CD4-positive, alpha-beta memory T cell (primary cell): ENCODE measurements at regions of chr17 and their contacts with region 1.

Region 1: GRCh38 chr17:32253117-32253611 is 12.5 kb upstream of the RHBDL3 start:
- DNase-seq: peak; percentile 41 to 62 (median 50)
- H3K4me3 ChIP-seq: no peak overlapping the region
- H3K4me3 Mint-ChIP-seq: no peak overlapping the region
- H3K27ac ChIP-seq: no peak overlapping the region
- H3K27ac Mint-ChIP-seq: no peak overlapping the region
- H3K4me1 ChIP-seq: no peaks in the 10 kb centered on the region
- H3K4me1 Mint-ChIP-seq: no peaks in the 10 kb centered on the region
- H3K27me3 ChIP-seq: no peaks in the 10 kb centered on the region
- H3K27me3 Mint-ChIP-seq: peaks cover 1 to 2% of the 10 kb centered on the region in 2 donors

Region 2: GRCh38 chr17:31702041-31702440 is 551.1 kb before region 1 on chr17:
- CTCF ChIA-PET with region 1: no interaction called
- POLR2A ChIA-PET with region 1: no interaction called
- intact Hi-C with region 1: no loop called
- DNase-seq: no peak
- H3K4me3 ChIP-seq: no peak overlapping the region
- H3K4me3 Mint-ChIP-seq: no peak overlapping the region
- H3K27ac ChIP-seq: no peak overlapping the region
- H3K27ac Mint-ChIP-seq: no peak overlapping the region
- H3K4me1 ChIP-seq: no peaks in the 10 kb centered on the region
- H3K4me1 Mint-ChIP-seq: no peaks in the 10 kb centered on the region
- H3K27me3 ChIP-seq: peaks cover 6% of the 10 kb centered on the region
- H3K27me3 Mint-ChIP-seq: peaks cover 16% of the 10 kb centered on the region in 2 donors

Region 3: GRCh38 chr17:32936894-32937500 is 683.8 kb after region 1 on chr17:
- CTCF ChIA-PET with region 1: no interaction called
- POLR2A ChIA-PET with region 1: no interaction called
- intact Hi-C with region 1: loop called (anchors 5 kb)
- DNase-seq: peak; percentile 38 to 53 (median 49)
- H3K4me3 ChIP-seq: no peak overlapping the region
- H3K4me3 Mint-ChIP-seq: peak overlapping the region in 3 of 8 donors; percentile 30 to 67 (median 65)
- H3K27ac ChIP-seq: no peak overlapping the region
- H3K27ac Mint-ChIP-seq: peak overlapping the region in 1 of 7 donors; percentile 62
- H3K4me1 ChIP-seq: peaks cover 4% of the 10 kb centered on the region
- H3K4me1 Mint-ChIP-seq: peaks cover 0 to 6% (median 4%) of the 10 kb centered on the region in 4 donors
- H3K27me3 ChIP-seq: no peaks in the 10 kb centered on the region
- H3K27me3 Mint-ChIP-seq: peaks cover 14 to 28% of the 10 kb centered on the region in 2 donors